H1 (cell line): ENCODE measurements at regions of chr17 and their contacts with region 1.

Region 1: DNA sequence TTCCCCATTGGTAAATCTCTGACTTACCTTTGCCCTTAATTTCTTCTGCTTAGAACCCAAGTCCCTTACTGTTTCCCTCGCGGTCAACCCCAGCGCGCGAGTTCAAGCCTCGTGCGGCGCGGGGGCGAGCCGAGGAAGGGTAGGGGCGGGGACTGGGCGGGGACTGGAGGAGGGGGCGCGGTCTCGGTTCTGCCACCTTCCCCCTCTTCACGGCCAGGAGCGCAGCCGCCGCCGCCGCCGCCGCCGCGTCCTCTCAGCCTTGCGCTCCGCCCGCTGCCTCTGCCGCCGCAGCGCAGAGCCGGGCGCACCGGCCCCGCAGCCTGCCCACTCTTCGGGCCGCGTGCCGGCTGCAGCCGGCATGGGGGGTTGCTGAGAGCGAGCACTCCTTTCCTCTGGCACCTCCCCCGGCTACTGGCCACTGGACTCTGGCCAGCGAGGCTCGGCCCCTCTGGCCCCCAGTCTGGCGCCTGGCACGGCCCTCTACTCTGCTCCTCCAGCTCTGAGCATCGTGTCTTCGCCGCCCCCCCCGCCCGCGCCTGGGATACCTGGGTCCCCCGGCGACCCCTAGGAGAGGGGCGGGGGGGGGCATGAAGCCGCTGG is at the start of gene RAPGEFL1:
- DNase-seq: peak in 1 of 2 experiments; percentile 86
- H3K4me3 ChIP-seq: peak within 1 kb of the TSS; percentile 39 to 80 (median 46)
- H3K27ac ChIP-seq: no peak within 1 kb of the TSS
- H3K4me1 ChIP-seq: peaks cover 5 to 20% (median 15%) of the 10 kb centered on the region in 4 experiments; a peak in 6 of 7 replicates
- H3K27me3 ChIP-seq: no peaks in the 10 kb centered on the region
- CTCF ChIP-seq: no peak
- EP300 ChIP-seq: peak in 1 of 2 experiments; percentile 63; a peak in 1 of 3 replicates
- POLR2A ChIP-seq: peak in 1 of 2 experiments; percentile 23; a peak in 2 of 3 replicates
- RAD21 ChIP-seq: no peak
- total RNA-seq, gene RAPGEFL1: 18.1 and 20.2 TPM in 2 replicates

Region 2: GRCh38 chr17:39845052-39845846 is 332.1 kb before region 1 on chr17:
- CTCF ChIA-PET with region 1: no interaction called
- POLR2A ChIA-PET with region 1: no interaction called
- DNase-seq: no peak
- H3K4me3 ChIP-seq: no peak overlapping the region
- H3K27ac ChIP-seq: no peak overlapping the region
- H3K4me1 ChIP-seq: no peaks in the 10 kb centered on the region
- H3K27me3 ChIP-seq: no peaks in the 10 kb centered on the region
- CTCF ChIP-seq: no peak
- EP300 ChIP-seq: no peak
- POLR2A ChIP-seq: no peak
- RAD21 ChIP-seq: no peak

Region 3: GRCh38 chr17:40121181-40122135 is 55.9 kb before region 1 on chr17 and contains the start of gene MSL1:
- CTCF ChIA-PET with region 1: interaction called, 3 read pairs
- POLR2A ChIA-PET with region 1: interaction called, 18 read pairs
- DNase-seq: peak in 1 of 2 experiments; percentile 88
- H3K4me3 ChIP-seq: peak within 1 kb of the TSS; percentile 80 to 91 (median 86)
- H3K27ac ChIP-seq: peak within 1 kb of the TSS; percentile 84
- H3K4me1 ChIP-seq: peaks cover 0 to 3% (median under 1%) of the 10 kb centered on the region in 4 experiments; a peak in 2 of 7 replicates
- H3K27me3 ChIP-seq: no peaks in the 10 kb centered on the region; a peak in 1 of 7 replicates
- CTCF ChIP-seq: no peak
- EP300 ChIP-seq: 0 out of 3 replicates have a peak, but pooled peaks of 1 of the 2 experiments have one; percentile 8
- POLR2A ChIP-seq: peak in 1 of 2 experiments; percentile 37; a peak in 1 of 3 replicates
- RAD21 ChIP-seq: no peak
- total RNA-seq, gene MSL1: 66.5 and 69.2 TPM in 2 replicates

Region 4: DNA sequence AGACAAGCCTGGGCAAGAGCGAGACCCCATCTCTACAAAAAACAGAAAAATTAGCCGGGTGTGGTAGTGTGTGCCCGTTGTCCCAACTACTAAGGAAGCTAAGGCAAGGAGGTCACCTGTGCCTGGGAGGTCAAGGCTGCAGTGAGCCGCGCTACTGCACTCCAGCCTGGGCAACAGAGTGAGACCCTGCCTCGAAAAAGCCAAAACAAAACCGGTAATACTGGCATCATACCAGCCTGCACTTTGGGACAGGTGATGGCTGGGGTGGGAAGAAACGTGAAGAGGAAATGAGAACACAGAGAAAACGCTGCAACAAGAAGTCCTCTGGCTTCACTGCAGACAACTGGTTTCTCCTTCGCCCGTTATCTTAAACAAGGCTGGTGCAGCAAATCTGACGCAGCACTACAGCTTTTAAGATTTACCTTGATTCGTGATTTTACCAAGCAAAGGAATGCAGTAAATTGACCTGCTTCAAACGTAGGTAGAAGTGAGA is 37.8 kb before region 1 on chr17:
- CTCF ChIA-PET with region 1: interaction called, 4 read pairs
- POLR2A ChIA-PET with region 1: interaction called, 15 read pairs
- DNase-seq: no peak
- H3K4me3 ChIP-seq: peak overlapping the region; percentile 51 to 88 (median 68)
- H3K27ac ChIP-seq: peak overlapping the region; percentile 84
- H3K4me1 ChIP-seq: peaks cover 0 to 4% (median 1%) of the 10 kb centered on the region in 4 experiments; a peak in 2 of 7 replicates
- H3K27me3 ChIP-seq: no peaks in the 10 kb centered on the region
- CTCF ChIP-seq: no peak
- EP300 ChIP-seq: no peak
- POLR2A ChIP-seq: no peak
- RAD21 ChIP-seq: no peak

Region 5: GRCh38 chr17:40151414-40151963 is 25.9 kb before region 1 on chr17:
- CTCF ChIA-PET with region 1: interaction called, 4 read pairs
- POLR2A ChIA-PET with region 1: interaction called, 11 read pairs
- DNase-seq: no peak
- H3K4me3 ChIP-seq: no peak overlapping the region
- H3K27ac ChIP-seq: no peak overlapping the region
- H3K4me1 ChIP-seq: no peaks in the 10 kb centered on the region
- H3K27me3 ChIP-seq: no peaks in the 10 kb centered on the region
- CTCF ChIP-seq: no peak
- EP300 ChIP-seq: no peak
- POLR2A ChIP-seq: no peak
- RAD21 ChIP-seq: no peak

Region 6: GRCh38 chr17:40191237-40192208 is 14.1 kb after region 1 on chr17:
- CTCF ChIA-PET with region 1: interaction called, 59 read pairs
- POLR2A ChIA-PET with region 1: interaction called, 105 read pairs
- DNase-seq: peak; percentile 70 to 87
- H3K4me3 ChIP-seq: peak overlapping the region; percentile 20 to 73 (median 44)
- H3K27ac ChIP-seq: no peak overlapping the region
- H3K4me1 ChIP-seq: peaks cover 0 to 15% (median 8%) of the 10 kb centered on the region in 4 experiments; a peak in 5 of 7 replicates
- H3K27me3 ChIP-seq: no peaks in the 10 kb centered on the region
- CTCF ChIP-seq: peak; percentile 58 to 73 (median 71)
- EP300 ChIP-seq: no peak
- POLR2A ChIP-seq: no peak
- RAD21 ChIP-seq: peak; percentile 32 to 60

Region 7: GRCh38 chr17:40224718-40225550 is 47.6 kb after region 1 on chr17:
- CTCF ChIA-PET with region 1: no interaction called
- POLR2A ChIA-PET with region 1: no interaction called
- DNase-seq: no peak
- H3K4me3 ChIP-seq: no peak overlapping the region
- H3K27ac ChIP-seq: no peak overlapping the region
- H3K4me1 ChIP-seq: no peaks in the 10 kb centered on the region
- H3K27me3 ChIP-seq: no peaks in the 10 kb centered on the region
- CTCF ChIP-seq: no peak
- EP300 ChIP-seq: no peak
- POLR2A ChIP-seq: no peak
- RAD21 ChIP-seq: no peak